PC-3 (cell line): ENCODE measurements at regions of chr3 and their contacts with region 1.

Region 1: GRCh38 chr3:127735767-127736704 is 63.3 kb downstream of the ABTB1 start:
- DNase-seq: peak; percentile 54
- ATAC-seq: peak; percentile 10; the same call in 1 of the 2 replicates
- H3K4me3 ChIP-seq: no peak overlapping the region
- H3K27ac ChIP-seq: peak overlapping the region; percentile 95
- H3K4me1 ChIP-seq: peaks cover 42% of the 10 kb centered on the region
- H3K27me3 ChIP-seq: no peaks in the 10 kb centered on the region
- CTCF ChIP-seq: no peak

Region 2: GRCh38 chr3:127384717-127385539 is 351.1 kb before region 1 on chr3:
- CTCF ChIA-PET with region 1: no interaction called
- POLR2A ChIA-PET with region 1: no interaction called
- intact Hi-C with region 1: no loop called
- DNase-seq: no peak
- ATAC-seq: no peak
- H3K4me3 ChIP-seq: no peak overlapping the region
- H3K27ac ChIP-seq: no peak overlapping the region
- H3K4me1 ChIP-seq: peaks cover 2% of the 10 kb centered on the region; the same call in 1 of the 2 replicates
- H3K27me3 ChIP-seq: peaks cover 23% of the 10 kb centered on the region
- CTCF ChIP-seq: no peak

Region 3: DNA sequence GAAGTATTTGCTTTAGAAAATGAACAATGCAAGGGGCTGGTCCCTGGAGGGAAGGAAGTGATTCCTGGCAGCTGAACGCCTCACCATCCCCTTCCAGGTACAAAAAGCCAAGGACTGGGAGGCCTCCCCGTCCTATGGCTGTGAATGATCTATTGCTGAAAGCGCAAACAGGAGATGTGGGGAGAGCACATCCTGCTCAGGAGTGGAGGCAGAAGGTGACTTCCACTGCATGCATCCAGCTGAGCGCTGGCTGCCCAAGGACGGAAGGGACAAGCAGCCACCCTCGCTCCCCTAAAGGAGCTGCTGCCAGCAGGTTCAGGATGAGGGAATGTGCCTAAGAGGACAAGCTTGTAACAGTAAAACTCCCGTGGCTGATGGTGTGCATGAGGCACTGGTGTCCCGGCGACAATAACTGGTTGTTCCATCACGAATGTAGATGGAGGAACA is 21.9 kb before region 1 on chr3:
- CTCF ChIA-PET with region 1: interaction called, 4 read pairs
- POLR2A ChIA-PET with region 1: no interaction called
- intact Hi-C with region 1: loop called (anchors 1 kb)
- DNase-seq: peak; percentile 42
- ATAC-seq: peak; percentile 66
- H3K4me3 ChIP-seq: no peak overlapping the region
- H3K27ac ChIP-seq: peak overlapping the region; percentile 64
- H3K4me1 ChIP-seq: peaks cover 33% of the 10 kb centered on the region
- H3K27me3 ChIP-seq: no peaks in the 10 kb centered on the region
- CTCF ChIP-seq: no peak